Activated CD4-positive, alpha-beta T cell treated with anti-CD3 and anti-CD28 coated beads, Interleukin-2, amount 10 ng/mL, durations not matched to agents 24 days and 14 days (primary cell): ENCODE measurements at regions of chrX and their contacts with region 1.

Region 1: DNA sequence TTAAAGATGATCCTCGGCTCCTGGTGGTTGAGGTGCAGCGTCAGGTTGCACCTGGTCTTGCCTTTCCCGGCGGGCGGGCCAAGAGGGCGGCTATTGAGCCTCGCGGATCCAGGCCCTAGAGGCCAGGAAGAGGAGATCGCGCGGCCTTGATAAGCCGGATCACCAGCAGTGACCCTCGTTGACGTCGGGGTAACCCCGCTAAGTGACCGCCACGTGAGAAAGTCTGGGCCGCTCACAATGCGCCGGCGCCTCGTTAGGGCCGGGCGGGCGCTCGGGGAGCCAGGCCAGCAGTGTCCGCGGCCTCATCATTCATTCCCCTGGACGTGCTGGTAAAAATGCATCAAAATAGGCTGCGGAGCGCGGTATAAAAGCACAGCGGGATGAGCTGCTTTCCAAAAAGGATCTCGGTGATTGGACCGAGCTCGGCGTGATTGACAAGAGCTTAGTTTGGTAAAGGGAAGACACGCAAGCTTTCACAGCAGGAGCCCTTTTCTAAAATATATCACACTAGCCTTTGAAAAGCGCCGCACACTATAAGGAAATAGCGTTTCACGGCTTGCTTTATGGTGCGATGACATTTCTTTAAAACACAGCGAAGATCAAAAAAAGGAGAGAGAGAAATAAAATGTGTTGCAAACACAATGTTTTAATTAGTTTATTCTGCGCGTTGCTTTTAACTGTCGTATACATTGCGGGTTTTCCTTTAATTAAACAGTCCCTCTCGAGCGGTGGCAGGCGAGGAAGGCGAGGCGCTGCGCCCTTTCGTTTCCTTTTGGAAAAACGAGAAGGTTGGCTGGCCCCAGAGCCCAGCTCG is 15.9 kb upstream of the ZIC3 start:
- DNase-seq: no peak
- H3K4me3 Mint-ChIP-seq: no peak overlapping the region
- H3K27ac Mint-ChIP-seq: no peak overlapping the region
- H3K4me1 Mint-ChIP-seq: no peaks in the 10 kb centered on the region
- H3K27me3 Mint-ChIP-seq: peaks cover 39% of the 10 kb centered on the region

Region 2: DNA sequence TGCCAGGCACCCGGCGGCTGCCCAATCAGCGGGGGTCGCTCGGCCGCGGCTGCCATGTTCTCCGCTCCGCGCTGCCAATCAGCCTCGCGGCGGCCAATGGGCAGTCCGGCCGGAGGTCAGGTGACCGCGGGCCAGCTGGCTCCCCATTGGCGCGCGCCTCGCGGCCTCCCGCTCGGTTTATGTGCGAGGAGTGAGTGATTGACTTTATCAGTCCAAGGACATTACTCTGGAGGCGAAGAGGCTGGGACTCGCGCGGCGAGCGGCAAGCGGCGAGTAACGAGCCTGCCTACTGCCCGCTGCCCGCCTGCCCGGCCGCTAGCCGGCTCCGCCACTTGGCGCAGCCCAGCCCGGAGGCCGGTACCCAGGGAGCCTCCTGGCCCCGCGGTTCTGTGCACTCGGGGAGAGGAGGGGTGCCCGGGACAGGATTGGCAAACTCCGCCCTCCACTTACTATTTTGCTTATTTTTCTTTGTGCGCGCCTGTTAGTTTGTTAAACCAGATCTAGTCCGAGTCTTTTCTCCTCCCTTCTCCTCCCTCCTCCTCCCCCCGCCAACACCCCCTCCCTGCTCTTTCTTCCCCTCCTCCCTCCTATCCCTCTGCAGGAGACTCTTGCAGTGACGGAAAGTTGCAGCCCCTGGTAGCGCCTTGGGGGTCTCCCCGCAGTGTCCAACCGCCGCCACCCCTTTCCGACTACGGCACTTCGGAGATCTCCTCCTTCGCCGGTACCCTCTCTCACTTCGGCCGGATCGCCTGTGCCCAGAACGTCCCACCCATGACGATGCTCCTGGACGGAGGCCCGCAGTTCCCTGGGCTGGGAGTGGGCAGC is 16.1 kb after region 1 on chrX and contains the start of gene ZIC3:
- intact Hi-C with region 1: loop called (anchors 1 kb)
- DNase-seq: no peak
- H3K4me3 Mint-ChIP-seq: peak within 1 kb of the TSS; percentile 36
- H3K27ac Mint-ChIP-seq: peak within 1 kb of the TSS; percentile 84
- H3K4me1 Mint-ChIP-seq: peaks cover 5% of the 10 kb centered on the region
- H3K27me3 Mint-ChIP-seq: peaks cover 65% of the 10 kb centered on the region
- total RNA-seq, gene ZIC3: not detected in 2 replicates